ENCODE measurements at regions of chr17 and their contacts with region 1.

Region 1: DNA sequence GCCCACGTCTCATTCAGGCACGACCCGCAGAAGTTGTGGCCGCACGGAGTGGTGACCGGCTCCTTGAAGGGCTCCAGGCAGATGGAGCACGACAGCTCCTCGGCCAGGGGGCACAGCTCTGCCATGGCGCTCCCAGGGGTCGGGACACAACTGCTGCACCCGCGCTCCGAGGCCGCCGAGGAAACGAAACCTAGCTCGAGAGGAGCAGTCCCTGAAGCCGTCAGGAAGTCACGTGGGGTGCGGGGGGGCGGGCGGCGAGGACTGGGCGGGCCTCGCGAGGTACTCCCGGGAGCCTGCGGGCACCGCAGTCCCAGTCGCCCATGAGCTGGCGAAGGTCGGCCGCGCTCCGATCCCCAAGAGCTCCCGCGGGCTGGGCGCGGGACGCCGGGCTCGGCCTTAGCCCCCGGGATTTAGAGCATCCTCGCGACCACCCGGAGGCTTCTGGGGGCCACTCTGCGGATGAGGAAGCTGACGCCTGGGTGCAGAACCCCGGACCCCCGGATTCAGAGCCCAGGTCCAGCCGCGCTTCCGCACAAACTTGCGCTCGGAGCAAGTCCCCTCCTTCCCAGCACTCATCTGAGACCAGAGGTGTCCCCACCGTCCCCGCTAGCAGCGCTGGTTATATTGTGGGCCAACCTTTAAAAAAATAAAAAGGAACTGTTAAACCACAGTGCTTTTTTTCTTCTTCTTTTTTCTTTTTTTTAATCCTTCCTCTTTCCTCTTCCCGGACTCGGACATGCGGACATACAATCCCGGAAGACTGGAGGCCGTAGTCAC is at the start of gene TRIM25:
- DNase-seq: peak; percentile 92
- H3K4me3 ChIP-seq: peak within 1 kb of the TSS; percentile 88 to 97 (median 90)
- H3K27ac ChIP-seq: peak within 1 kb of the TSS; percentile 92
- H3K4me1 ChIP-seq: peaks cover 43% of the 10 kb centered on the region
- H3K27me3 ChIP-seq: no peaks in the 10 kb centered on the region
- CTCF ChIP-seq: no peak
- total RNA-seq, gene TRIM25: 49.5 to 95.0 TPM

Region 2: GRCh38 chr17:56833809-56834379 is 80.2 kb before region 1 on chr17 and contains the starts of genes C17orf67 and DGKE:
- CTCF ChIA-PET with region 1: no interaction called
- dilution Hi-C with region 1: no loop called
- in situ Hi-C with region 1: no loop called
- intact Hi-C with region 1: loop called (anchors 1 kb)
- DNase-seq: peak; percentile 94
- H3K4me3 ChIP-seq: peak within 1 kb of the TSS; percentile 71 to 90 (median 74)
- H3K27ac ChIP-seq: peak within 1 kb of the TSS; percentile 66
- H3K4me1 ChIP-seq: peaks cover 30% of the 10 kb centered on the region
- H3K27me3 ChIP-seq: no peaks in the 10 kb centered on the region
- CTCF ChIP-seq: no peak
- total RNA-seq, gene C17orf67: 0.17 to 2.6 TPM
- total RNA-seq, gene DGKE: 6.7 to 13.4 TPM

Region 3: GRCh38 chr17:56926701-56927590 is 12.9 kb after region 1 on chr17:
- CTCF ChIA-PET with region 1: no interaction called
- dilution Hi-C with region 1: no loop called
- in situ Hi-C with region 1: no loop called
- intact Hi-C with region 1: no loop called
- DNase-seq: no peak
- H3K4me3 ChIP-seq: no peak overlapping the region
- H3K27ac ChIP-seq: no peak overlapping the region
- H3K4me1 ChIP-seq: no peaks in the 10 kb centered on the region
- H3K27me3 ChIP-seq: no peaks in the 10 kb centered on the region
- CTCF ChIP-seq: no peak

Region 4: DNA sequence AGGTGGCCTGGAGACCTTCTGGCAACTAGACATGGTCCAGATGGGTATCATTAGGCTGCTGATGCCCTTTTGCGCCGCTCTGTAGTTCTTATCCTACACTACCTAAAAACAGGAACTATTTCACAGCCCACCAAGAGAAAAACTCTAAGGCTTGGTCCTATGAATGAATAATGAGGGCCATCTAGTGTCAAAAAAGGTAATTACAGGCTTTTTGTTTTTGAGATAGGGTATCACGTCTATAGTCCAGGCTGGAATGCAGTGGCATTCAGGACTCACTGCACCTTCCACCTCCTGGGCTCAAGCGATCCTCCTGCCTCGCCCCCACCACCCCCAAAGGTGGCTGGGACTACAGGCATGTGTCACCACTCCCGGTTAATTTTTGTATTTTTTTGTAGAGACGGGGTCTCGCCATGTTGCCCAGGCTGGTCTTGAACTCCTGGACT is 25.9 kb after region 1 on chr17:
- CTCF ChIA-PET with region 1: no interaction called
- dilution Hi-C with region 1: no loop called
- in situ Hi-C with region 1: no loop called
- intact Hi-C with region 1: loop called (anchors 1 kb)
- DNase-seq: peak; percentile 32
- H3K4me3 ChIP-seq: no peak overlapping the region
- H3K27ac ChIP-seq: no peak overlapping the region
- H3K4me1 ChIP-seq: peaks cover 19% of the 10 kb centered on the region
- H3K27me3 ChIP-seq: no peaks in the 10 kb centered on the region
- CTCF ChIP-seq: peak; percentile 60 to 71